ENCODE measurements at regions of chr17 and their contacts with region 1.

Region 1: GRCh38 chr17:3865176-3865575 is 19.1 kb upstream of the NCBP3 start:
- DNase-seq: no peak
- ATAC-seq: peak in 4 of 8 donors; percentile 37 to 68 (median 62)
- H3K4me3 ChIP-seq: no peak overlapping the region
- H3K27ac ChIP-seq: no peak overlapping the region
- H3K4me1 ChIP-seq: peaks cover 0 to 8% (median 0%) of the 10 kb centered on the region in 9 donors
- H3K27me3 ChIP-seq: no peaks in the 10 kb centered on the region
- CTCF ChIP-seq: no peak

Region 2: DNA sequence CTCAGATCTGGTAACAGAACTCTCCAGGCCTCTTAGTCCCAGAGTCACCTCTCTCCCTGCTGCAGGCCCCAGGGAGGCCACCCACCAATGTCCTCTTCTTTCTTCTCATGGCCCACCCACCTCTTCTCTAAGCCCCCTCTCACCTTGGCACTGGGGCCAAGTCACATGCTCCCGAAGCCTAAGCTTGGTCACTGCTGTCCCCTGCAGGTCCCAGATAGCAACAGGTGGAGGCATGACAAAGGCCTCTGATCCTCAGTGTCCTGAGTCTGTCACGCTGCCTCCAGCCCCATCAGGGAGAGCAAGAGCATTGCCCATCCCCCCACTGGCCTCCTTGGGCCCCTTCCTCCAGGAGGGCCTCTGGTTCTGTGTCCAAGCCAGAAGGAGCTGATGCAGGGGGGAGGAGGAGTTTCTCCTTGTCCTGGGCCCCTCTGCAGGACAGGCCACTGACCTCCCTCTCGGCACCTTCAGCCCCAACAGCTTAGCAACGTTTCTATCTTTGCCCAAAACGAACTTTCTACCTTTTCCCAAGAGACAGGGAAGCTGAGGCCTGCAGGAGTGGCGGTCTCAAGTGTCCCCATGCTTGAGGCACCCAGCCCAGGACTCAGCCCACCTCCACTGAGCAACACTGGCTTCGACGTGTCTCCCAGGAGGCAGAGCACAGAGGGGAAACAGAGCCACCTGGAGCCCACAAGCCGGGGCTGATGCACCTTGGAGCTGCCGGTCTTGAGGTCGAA is 42.5 kb after region 1 on chr17:
- intact Hi-C with region 1: loop called in 8 of 10 experiments (anchors 5 kb)
- DNase-seq: no peak
- ATAC-seq: no peak
- H3K4me3 ChIP-seq: no peak overlapping the region
- H3K27ac ChIP-seq: no peak overlapping the region
- H3K4me1 ChIP-seq: peaks cover 0 to 15% (median 10%) of the 10 kb centered on the region in 9 donors
- H3K27me3 ChIP-seq: no peaks in the 10 kb centered on the region
- CTCF ChIP-seq: peak in 7 of 9 donors; percentile 24 to 51 (median 34)

Region 3: DNA sequence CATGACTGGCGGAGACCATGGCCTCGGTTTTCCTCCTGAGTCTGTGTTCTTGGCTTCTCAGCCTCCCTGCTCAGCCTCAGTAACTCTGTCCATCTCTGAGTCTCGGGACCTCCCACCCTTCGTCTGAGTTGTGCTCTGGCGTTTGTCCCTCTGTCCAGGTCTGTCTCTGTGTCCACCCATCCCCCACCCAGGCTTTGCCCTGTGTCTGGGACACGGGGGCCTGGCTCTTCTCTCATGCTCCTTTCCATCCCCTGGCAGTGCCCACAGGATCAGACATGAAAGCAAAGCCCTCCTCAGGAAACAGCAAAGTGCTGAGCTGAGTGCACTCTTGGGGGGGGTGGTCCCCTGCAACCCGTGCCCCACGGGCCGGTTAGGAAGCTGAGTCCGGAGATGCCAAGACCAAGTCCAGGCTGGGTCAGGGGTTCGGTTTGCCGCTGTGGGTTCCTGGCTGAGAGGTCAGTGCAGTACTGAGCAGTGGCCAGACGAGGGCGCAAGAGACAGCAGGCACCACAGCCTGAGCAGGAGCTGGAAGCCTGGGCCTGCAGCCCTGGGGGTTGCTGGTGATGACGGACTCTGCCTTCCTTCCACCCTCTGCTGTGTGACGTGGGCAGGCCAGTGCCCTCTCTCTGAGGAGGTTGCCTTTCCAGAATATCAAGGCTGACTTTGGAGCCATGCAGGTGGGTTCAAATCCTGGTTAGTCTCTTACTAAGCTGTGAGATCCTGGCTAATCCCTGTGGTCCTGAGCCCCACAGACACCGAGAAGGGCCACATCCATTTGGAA is 48.5 kb after region 1 on chr17:
- intact Hi-C with region 1: loop called in 9 of 10 experiments (anchors 5 kb)
- DNase-seq: peak; percentile 79 to 86
- ATAC-seq: peak; percentile 57 to 78 (median 68)
- H3K4me3 ChIP-seq: peak overlapping the region in 1 of 10 donors; percentile 51
- H3K27ac ChIP-seq: peak overlapping the region in 3 of 10 donors; percentile 33 to 89 (median 41)
- H3K4me1 ChIP-seq: peaks cover 9 to 58% (median 36%) of the 10 kb centered on the region in 9 donors
- H3K27me3 ChIP-seq: no peaks in the 10 kb centered on the region
- CTCF ChIP-seq: peak; percentile 91 to 99 (median 98)

Measured in heart right ventricle (tissue), 16 donors.